GM12878 (cell line): ENCODE measurements at regions of chr7 and their contacts with region 1.

Region 1: DNA sequence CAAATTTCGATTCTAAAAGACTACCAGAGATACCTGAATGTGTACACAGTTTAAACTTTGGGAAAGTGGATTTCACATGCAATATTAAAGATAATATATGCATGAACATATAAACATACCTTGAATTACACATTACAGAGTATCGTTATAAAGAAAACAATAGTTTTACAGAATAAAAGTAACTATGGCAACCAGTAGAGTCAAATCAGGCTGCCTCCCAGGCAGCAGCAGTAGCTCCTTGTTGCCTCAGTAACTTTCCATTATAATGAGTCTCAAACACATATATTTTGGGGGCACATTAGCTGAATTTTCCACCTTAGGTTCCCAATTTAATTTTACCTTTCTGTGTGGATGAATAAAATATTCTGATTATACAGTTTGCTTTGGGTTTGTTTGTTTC is 164.4 kb upstream of the FEZF1 start:
- DNase-seq: no peak
- ATAC-seq: no peak; the same call in 2 of the 3 replicates
- H3K4me3 ChIP-seq: no peak overlapping the region
- H3K27ac ChIP-seq: no peak overlapping the region
- H3K4me1 ChIP-seq: no peaks in the 10 kb centered on the region
- H3K27me3 ChIP-seq: no peaks in the 10 kb centered on the region
- CTCF ChIP-seq: no peak
- EP300 ChIP-seq: no peak
- POLR2A ChIP-seq: no peak
- RAD21 ChIP-seq: no peak

Region 2: GRCh38 chr7:122453432-122453831 is 15.5 kb before region 1 on chr7:
- CTCF ChIA-PET with region 1: no interaction called
- POLR2A ChIA-PET with region 1: no interaction called
- RAD21 ChIA-PET with region 1: no interaction called
- SMC1A ChIA-PET with region 1: interaction called, 3 read pairs
- in situ Hi-C with region 1: no loop called
- intact Hi-C with region 1: loop called (anchors 2 kb)
- DNase-seq: no peak
- ATAC-seq: no peak
- H3K4me3 ChIP-seq: no peak overlapping the region
- H3K27ac ChIP-seq: no peak overlapping the region
- H3K4me1 ChIP-seq: no peaks in the 10 kb centered on the region
- H3K27me3 ChIP-seq: no peaks in the 10 kb centered on the region
- CTCF ChIP-seq: no peak
- EP300 ChIP-seq: no peak
- POLR2A ChIP-seq: no peak
- RAD21 ChIP-seq: no peak

Region 3: GRCh38 chr7:122481046-122481445 is 12.1 kb after region 1 on chr7:
- CTCF ChIA-PET with region 1: interaction called, 3 read pairs
- POLR2A ChIA-PET with region 1: interaction called, 4 read pairs
- RAD21 ChIA-PET with region 1: interaction called, 6 read pairs
- SMC1A ChIA-PET with region 1: interaction called, 16 read pairs
- in situ Hi-C with region 1: no loop called
- intact Hi-C with region 1: no loop called
- DNase-seq: no peak
- ATAC-seq: no peak
- H3K4me3 ChIP-seq: no peak overlapping the region
- H3K27ac ChIP-seq: no peak overlapping the region
- H3K4me1 ChIP-seq: no peaks in the 10 kb centered on the region
- H3K27me3 ChIP-seq: no peaks in the 10 kb centered on the region
- CTCF ChIP-seq: no peak
- EP300 ChIP-seq: no peak
- POLR2A ChIP-seq: no peak
- RAD21 ChIP-seq: no peak